ENCODE measurements at regions of chr2 and their contacts with region 1.

Region 1: GRCh38 chr2:176643646-176644045 is 374.4 kb downstream of the MTX2 start:
- DNase-seq: no peak
- ATAC-seq: no peak
- H3K4me3 ChIP-seq: no peak overlapping the region
- H3K4me3 Mint-ChIP-seq: no peak overlapping the region
- H3K27ac ChIP-seq: no peak overlapping the region
- H3K27ac Mint-ChIP-seq: no peak overlapping the region
- H3K4me1 ChIP-seq: no peaks in the 10 kb centered on the region
- H3K4me1 Mint-ChIP-seq: no peaks in the 10 kb centered on the region
- H3K27me3 ChIP-seq: peaks cover 25% of the 10 kb centered on the region
- H3K27me3 Mint-ChIP-seq: peaks cover 53 to 95% of the 10 kb centered on the region in 2 donors
- CTCF ChIP-seq: no peak

Region 2: DNA sequence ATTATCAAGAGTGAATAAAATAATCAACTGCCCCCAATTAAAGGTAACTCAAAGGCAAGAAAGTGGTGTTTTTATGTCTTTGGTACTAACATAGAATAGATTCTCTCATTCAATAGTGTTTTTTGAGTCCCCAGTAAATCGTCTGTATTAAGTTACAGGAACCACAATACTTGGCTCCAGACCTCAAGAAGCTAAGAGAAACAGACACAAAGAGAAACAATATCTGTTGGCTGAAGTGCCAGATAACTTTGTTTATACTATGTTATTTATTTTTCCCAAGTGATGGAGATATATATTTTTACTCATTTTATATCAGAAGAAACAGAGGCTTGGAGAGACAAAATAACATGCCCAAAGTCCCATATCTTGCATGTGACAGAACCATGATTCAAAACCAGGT is 367.2 kb after region 1 on chr2:
- intact Hi-C with region 1: loop called (anchors 5 kb)
- DNase-seq: no peak
- ATAC-seq: no peak
- H3K4me3 ChIP-seq: no peak overlapping the region
- H3K4me3 Mint-ChIP-seq: no peak overlapping the region
- H3K27ac ChIP-seq: no peak overlapping the region
- H3K27ac Mint-ChIP-seq: no peak overlapping the region
- H3K4me1 ChIP-seq: peaks cover 3% of the 10 kb centered on the region
- H3K4me1 Mint-ChIP-seq: peaks cover 5% of the 10 kb centered on the region in 2 donors
- H3K27me3 ChIP-seq: no peaks in the 10 kb centered on the region
- H3K27me3 Mint-ChIP-seq: peaks cover 5 to 30% of the 10 kb centered on the region in 2 donors
- CTCF ChIP-seq: no peak